ENCODE measurements at regions of chr10 and their contacts with region 1.

Region 1: GRCh38 chr10:69800109-69800508 is 1.6 kb upstream of the COL13A1 start:
- DNase-seq: peak; percentile 79
- H3K4me3 Mint-ChIP-seq: no peak overlapping the region
- H3K27ac Mint-ChIP-seq: no peak overlapping the region
- H3K4me1 Mint-ChIP-seq: peaks cover 9% of the 10 kb centered on the region
- H3K27me3 Mint-ChIP-seq: peaks cover 89% of the 10 kb centered on the region
- CTCF ChIP-seq: peak; percentile 91

Region 2: DNA sequence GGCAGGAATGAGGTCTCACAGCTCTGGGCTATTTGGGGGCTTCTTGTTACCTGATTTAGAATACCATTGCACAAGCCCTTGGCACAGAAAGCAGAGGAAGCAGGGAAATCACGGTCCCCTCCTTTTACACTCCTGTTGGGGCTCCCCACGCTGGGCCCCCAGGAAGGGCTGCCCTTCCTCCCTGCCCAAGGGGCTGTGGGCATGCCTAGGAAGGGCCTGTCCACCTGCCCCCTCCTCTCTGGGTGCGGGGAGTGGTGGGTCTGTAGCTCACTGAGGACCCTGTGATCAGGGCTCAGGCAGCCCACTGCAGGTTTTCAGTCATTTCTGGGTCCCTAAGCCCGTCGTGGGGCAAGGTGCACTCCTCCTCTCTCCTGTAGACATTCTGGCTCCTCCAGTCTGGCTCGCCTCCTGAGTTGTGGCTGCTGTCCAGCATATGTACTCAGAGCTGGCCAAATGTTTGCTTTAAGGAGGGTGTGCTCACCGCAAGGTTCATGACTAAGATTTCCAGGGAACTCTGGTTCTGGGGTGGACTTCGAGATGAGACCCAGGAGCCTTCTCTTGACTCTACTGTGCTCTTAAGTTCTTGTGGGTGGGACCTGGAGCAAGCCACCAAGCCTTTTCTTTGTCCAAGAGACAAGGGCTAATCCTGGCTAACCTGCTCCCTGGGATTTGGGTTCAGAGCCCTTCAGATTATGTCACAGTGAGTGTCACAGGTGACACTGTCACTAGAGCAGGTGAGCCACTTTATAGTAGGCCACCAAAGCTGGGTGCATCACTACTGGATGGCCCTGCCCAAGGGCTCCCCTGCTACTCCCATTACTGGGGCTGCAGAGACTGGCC is 439.4 kb before region 1 on chr10:
- CTCF ChIA-PET with region 1: no interaction called
- intact Hi-C with region 1: no loop called
- DNase-seq: peak; percentile 85
- H3K4me3 Mint-ChIP-seq: peak overlapping the region; percentile 13
- H3K27ac Mint-ChIP-seq: peak overlapping the region; percentile 50
- H3K4me1 Mint-ChIP-seq: peaks cover 51% of the 10 kb centered on the region
- H3K27me3 Mint-ChIP-seq: no peaks in the 10 kb centered on the region
- CTCF ChIP-seq: no peak

Region 3: DNA sequence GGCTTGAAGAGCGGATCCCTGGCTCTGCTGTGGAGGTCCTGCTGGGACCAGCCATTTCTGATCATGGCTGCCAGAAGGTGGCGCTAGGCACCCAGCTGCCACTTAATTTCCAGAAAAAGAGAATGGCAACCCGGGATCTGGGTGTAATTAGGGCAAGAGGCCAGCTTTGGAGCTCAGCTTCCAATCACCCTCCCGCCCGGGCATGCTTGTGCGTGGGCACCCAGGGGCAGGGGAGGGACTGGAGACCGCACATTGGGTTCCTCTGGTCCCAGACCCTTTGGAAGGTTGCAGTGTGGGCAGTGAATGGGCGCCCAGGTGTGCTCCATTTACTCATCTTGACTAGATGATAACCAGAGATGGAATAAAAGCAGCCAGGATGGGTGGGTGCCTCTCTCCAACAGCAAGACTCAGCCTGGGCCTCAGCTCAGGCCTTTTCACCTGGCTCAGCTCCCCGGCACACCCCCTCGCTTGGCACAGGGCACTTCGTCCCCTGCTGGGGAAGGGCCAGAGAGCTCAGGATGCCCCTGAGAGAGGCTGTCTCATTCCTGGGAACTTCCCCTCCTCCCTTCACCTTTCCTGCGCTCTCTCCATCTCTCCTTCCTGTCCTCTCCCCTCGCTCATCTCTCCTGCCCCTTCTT is 155.3 kb before region 1 on chr10:
- CTCF ChIA-PET with region 1: interaction called, 3 read pairs
- intact Hi-C with region 1: loop called (anchors 2 kb)
- DNase-seq: peak; percentile 85
- H3K4me3 Mint-ChIP-seq: no peak overlapping the region
- H3K27ac Mint-ChIP-seq: no peak overlapping the region
- H3K4me1 Mint-ChIP-seq: no peaks in the 10 kb centered on the region
- H3K27me3 Mint-ChIP-seq: peaks cover 18% of the 10 kb centered on the region
- CTCF ChIP-seq: peak; percentile 90

Region 4: GRCh38 chr10:69742928-69743602 is 57.0 kb before region 1 on chr10:
- CTCF ChIA-PET with region 1: interaction called, 6 read pairs
- intact Hi-C with region 1: loop called (anchors 1 kb)
- DNase-seq: peak; percentile 70
- H3K4me3 Mint-ChIP-seq: no peak overlapping the region
- H3K27ac Mint-ChIP-seq: no peak overlapping the region
- H3K4me1 Mint-ChIP-seq: no peaks in the 10 kb centered on the region
- H3K27me3 Mint-ChIP-seq: peaks cover 88% of the 10 kb centered on the region
- CTCF ChIP-seq: peak; percentile 62

Region 5: GRCh38 chr10:69786791-69787190 is 13.3 kb before region 1 on chr10:
- CTCF ChIA-PET with region 1: interaction called, 11 read pairs
- intact Hi-C with region 1: no loop called
- DNase-seq: no peak
- H3K4me3 Mint-ChIP-seq: no peak overlapping the region
- H3K27ac Mint-ChIP-seq: no peak overlapping the region
- H3K4me1 Mint-ChIP-seq: no peaks in the 10 kb centered on the region
- H3K27me3 Mint-ChIP-seq: peaks cover 16% of the 10 kb centered on the region
- CTCF ChIP-seq: no peak

Region 6: DNA sequence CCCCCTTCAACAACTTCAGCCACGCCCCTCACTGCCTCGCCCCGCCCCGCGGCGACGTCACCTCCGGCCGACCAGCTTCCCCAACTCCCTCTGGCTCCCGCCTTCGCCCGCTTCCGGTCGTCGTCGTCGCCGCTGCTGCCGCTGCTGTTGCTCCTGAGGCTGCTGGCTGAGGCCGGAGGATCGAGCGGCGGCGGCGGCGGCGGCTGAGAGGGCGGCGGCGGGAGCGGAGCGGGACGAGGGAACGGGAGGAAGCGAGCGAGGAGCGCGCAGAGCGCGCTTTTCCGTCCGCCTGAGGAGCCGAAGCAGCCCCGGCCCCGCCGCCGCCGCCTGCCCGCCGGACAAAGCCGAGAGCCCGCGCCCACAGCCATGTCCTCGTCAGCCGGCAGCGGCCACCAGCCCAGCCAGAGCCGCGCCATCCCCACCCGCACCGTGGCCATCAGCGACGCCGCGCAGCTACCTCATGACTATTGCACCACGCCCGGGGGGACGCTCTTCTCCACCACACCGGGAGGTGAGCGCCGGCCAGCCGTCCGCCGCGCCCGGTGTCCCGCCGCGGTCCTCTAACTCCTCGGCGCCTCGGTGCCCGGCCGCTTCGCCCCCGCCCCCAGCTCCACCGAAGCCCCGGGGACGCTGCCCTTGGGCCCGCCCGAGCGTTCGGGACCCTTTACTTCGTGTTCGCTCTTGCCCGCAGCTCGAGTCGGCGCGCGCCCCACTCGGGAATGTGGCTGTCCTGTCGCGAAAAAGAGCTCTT is 604.1 kb after region 1 on chr10 and contains the start of gene EIF4EBP2:
- CTCF ChIA-PET with region 1: no interaction called
- intact Hi-C with region 1: no loop called
- DNase-seq: peak; percentile 100
- H3K4me3 Mint-ChIP-seq: peak within 1 kb of the TSS; percentile 85
- H3K27ac Mint-ChIP-seq: peak within 1 kb of the TSS; percentile 72
- H3K4me1 Mint-ChIP-seq: peaks cover 37% of the 10 kb centered on the region
- H3K27me3 Mint-ChIP-seq: no peaks in the 10 kb centered on the region
- CTCF ChIP-seq: no peak
- total RNA-seq, gene EIF4EBP2: 53.1 and 54.7 TPM in 2 replicates

Region 7: GRCh38 chr10:71684356-71685173 is 1884.5 kb after region 1 on chr10:
- CTCF ChIA-PET with region 1: no interaction called
- intact Hi-C with region 1: no loop called
- DNase-seq: peak; percentile 50
- H3K4me3 Mint-ChIP-seq: no peak overlapping the region
- H3K27ac Mint-ChIP-seq: no peak overlapping the region
- H3K4me1 Mint-ChIP-seq: no peaks in the 10 kb centered on the region
- H3K27me3 Mint-ChIP-seq: peaks cover 73% of the 10 kb centered on the region
- CTCF ChIP-seq: peak; percentile 26

Measured in Calu3 (cell line).